Gastrocnemius medialis (tissue), 4 donors: ENCODE measurements at regions of chr3 and their contacts with region 1.

Region 1: GRCh38 chr3:166304556-166304955 is 467.3 kb upstream of the BCHE start:
- DNase-seq: no peak
- ATAC-seq: no peak
- H3K4me3 ChIP-seq: no peak overlapping the region
- H3K27ac ChIP-seq: no peak overlapping the region
- H3K4me1 ChIP-seq: no peaks in the 10 kb centered on the region
- H3K27me3 ChIP-seq: no peaks in the 10 kb centered on the region
- CTCF ChIP-seq: no peak
- POLR2A ChIP-seq: no peak

Region 2: DNA sequence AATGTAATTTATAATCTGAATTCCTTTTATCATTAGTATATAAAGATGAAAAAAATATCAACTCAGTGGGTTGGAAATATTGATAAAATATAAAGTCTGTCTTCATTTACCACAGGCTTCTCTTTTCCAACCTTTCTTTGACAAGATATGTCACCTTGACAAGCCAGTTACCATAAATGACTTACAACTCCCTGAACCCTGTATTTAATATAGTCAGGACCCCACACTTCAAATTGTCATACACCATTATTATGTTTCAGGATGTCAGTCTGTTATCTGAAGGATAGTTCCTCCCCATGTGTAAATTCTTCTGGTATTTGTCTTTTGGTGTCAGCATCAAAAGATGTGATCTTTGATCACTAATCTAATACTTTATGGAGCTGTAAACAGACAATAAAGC is 36.0 kb after region 1 on chr3:
- in situ Hi-C with region 1: no loop called
- intact Hi-C with region 1: loop called (anchors 1 kb)
- DNase-seq: no peak
- ATAC-seq: no peak
- H3K4me3 ChIP-seq: no peak overlapping the region
- H3K27ac ChIP-seq: no peak overlapping the region
- H3K4me1 ChIP-seq: no peaks in the 10 kb centered on the region
- H3K27me3 ChIP-seq: no peaks in the 10 kb centered on the region
- CTCF ChIP-seq: no peak
- POLR2A ChIP-seq: no peak

Region 3: DNA sequence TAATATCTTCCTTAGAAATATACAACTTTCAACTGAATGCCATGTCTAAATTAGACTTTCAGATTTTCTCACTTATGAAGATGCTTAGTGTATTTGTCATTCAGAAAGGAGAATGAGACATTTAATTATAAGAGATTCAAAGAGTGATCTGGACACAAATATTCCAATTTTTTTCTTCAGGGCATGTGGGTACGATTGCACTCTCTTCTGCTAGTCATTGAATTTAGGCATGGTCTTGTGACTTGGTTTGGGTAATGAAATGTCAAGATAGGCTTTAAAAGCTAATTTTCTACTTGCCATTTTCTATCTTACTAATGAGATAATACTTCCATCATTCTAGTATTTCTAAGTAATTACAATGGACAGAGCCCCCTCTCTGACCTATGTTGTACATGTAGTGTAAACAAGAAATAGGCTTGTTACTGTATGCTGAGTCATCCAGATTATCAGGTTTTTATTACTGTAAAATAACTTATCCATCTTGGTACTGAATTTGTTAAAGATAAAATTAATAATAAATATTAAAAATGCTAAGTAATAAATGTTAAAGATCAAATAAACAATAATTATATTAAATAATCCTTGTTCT is 303.5 kb after region 1 on chr3:
- in situ Hi-C with region 1: no loop called
- intact Hi-C with region 1: no loop called
- DNase-seq: no peak
- ATAC-seq: no peak
- H3K4me3 ChIP-seq: no peak overlapping the region
- H3K27ac ChIP-seq: no peak overlapping the region
- H3K4me1 ChIP-seq: no peaks in the 10 kb centered on the region
- H3K27me3 ChIP-seq: no peaks in the 10 kb centered on the region
- CTCF ChIP-seq: no peak
- POLR2A ChIP-seq: no peak